ENCODE measurements at regions of chr7 and their contacts with region 1.

Region 1: DNA sequence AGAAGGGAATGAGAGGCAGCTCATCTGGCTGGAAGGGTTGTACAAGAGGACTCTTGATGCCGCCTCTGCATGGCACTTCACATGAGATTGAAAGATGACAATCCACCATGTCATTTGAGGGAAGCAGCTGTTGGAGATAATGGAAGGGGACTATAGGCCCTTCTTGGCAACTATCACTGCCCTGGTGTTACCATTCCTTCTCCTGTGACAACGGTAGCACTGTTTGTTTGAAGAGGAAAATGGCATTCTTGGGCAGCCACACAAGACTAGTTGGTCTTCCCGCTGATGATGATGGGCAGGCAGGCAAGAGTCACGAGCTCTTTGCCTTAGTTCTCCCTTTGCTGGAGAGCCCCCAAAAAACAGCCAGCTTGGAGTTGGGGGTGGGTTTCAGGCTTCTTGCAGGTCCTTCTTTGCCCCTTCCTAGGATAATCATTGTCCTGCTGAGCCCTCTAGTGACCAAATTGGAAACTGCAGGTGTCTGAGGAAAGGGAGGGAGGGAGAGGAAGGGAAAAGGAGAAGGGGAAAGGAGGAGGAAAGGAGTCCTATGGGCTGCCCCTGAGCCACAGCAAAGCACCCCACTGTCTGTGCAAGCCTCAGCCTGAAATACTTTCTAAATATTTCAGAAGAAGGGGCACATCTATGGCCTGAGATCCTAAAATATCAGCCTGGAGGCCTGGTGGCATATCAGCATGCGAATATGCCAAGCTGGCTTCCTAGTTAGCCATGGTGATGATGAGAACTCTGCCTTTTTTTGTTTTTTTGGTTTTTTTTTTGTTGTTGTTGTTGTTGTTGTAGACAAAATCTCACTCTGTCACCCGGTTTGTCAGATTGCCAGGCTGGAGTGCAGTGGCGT is 165.6 kb upstream of the KMT2E start:
- DNase-seq: peak; percentile 19
- H3K4me3 Mint-ChIP-seq: no peak overlapping the region
- H3K27ac Mint-ChIP-seq: no peak overlapping the region
- H3K4me1 Mint-ChIP-seq: no peaks in the 10 kb centered on the region
- H3K27me3 Mint-ChIP-seq: peaks cover 14% of the 10 kb centered on the region

Region 2: GRCh38 chr7:103573479-103574058 is 1274.8 kb before region 1 on chr7:
- intact Hi-C with region 1: loop called (anchors 5 kb)
- DNase-seq: no peak
- H3K4me3 Mint-ChIP-seq: no peak overlapping the region
- H3K27ac Mint-ChIP-seq: no peak overlapping the region
- H3K4me1 Mint-ChIP-seq: no peaks in the 10 kb centered on the region
- H3K27me3 Mint-ChIP-seq: peaks cover 2% of the 10 kb centered on the region

Region 3: GRCh38 chr7:104231054-104232046 is 617.0 kb before region 1 on chr7:
- intact Hi-C with region 1: loop called (anchors 1 kb)
- DNase-seq: peak; percentile 26
- H3K4me3 Mint-ChIP-seq: no peak overlapping the region
- H3K27ac Mint-ChIP-seq: no peak overlapping the region
- H3K4me1 Mint-ChIP-seq: peaks cover 5% of the 10 kb centered on the region
- H3K27me3 Mint-ChIP-seq: peaks cover 24% of the 10 kb centered on the region

Region 4: GRCh38 chr7:104272767-104273384 is 575.5 kb before region 1 on chr7:
- intact Hi-C with region 1: loop called (anchors 2 kb)
- DNase-seq: no peak
- H3K4me3 Mint-ChIP-seq: no peak overlapping the region
- H3K27ac Mint-ChIP-seq: no peak overlapping the region
- H3K4me1 Mint-ChIP-seq: peaks cover 4% of the 10 kb centered on the region
- H3K27me3 Mint-ChIP-seq: peaks cover 6% of the 10 kb centered on the region

Region 5: DNA sequence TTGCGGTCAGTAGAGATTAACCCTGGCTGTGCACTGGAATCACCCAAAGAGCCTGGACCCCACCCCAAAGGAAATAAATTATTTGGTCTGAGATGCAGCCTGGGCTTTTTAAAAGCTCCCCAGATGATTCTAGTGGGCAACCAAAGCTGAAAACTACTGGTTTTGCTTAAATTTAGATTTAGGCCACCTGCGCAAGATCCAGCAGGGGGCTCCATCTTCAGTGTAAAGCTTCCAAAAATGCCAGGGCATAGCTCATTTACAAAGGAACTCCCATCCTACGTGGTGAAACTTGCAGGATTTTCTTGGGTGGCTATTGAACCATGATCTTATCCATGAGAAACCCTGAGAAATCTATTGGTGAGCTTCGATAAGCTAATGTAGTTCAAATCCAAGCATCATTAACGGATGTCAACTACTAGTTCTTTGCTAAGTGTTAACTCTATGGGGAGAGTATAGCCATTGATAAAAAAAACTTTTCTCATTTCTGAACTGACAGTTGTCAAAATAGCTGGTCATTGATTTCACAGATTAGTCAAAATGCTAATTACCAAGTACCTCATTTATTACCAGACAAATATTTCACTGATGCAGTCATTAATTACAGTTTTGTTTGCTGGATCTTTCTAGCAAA is 204.7 kb before region 1 on chr7:
- intact Hi-C with region 1: loop called (anchors 1 kb)
- DNase-seq: no peak
- H3K4me3 Mint-ChIP-seq: no peak overlapping the region
- H3K27ac Mint-ChIP-seq: no peak overlapping the region
- H3K4me1 Mint-ChIP-seq: no peaks in the 10 kb centered on the region
- H3K27me3 Mint-ChIP-seq: no peaks in the 10 kb centered on the region

Measured in activated T-helper 1 cell treated with anti-CD3 and anti-CD28 coated beads, Interleukin-12 subunit alpha, Interleukin-12 subunit beta, Interleukin-2, Interleukin-4 antibody, amounts not matched to agents 30 ng/mL and 10 ng/mL and 1 ng/mL, durations not matched to agents 14 hours and 24 hours and 36 hours (primary cell).